Psoas muscle (tissue), 8 donors: ENCODE measurements at regions of chr7 and their contacts with region 1.

Region 1: DNA sequence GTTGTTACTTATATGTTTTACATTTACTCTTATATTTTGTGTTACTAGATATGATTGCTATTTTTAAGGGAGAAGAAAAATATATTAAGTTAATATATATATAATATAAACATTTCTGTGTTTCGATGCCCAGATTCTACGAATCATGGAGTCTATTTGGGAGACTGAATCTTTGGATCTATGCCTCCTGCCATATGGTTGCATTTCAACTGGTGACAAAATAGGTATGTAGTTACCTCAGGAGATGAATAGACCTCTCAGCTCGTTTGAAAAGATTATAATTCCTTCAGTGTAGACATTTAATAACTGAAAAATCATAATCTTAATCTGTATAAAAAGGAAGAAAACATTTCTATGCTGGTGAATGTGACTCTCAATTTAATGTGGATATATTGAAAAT is 16.9 kb downstream of the PIK3CG start:
- DNase-seq: no peak
- ATAC-seq: no peak
- H3K4me3 ChIP-seq: no peak overlapping the region
- H3K27ac ChIP-seq: no peak overlapping the region
- H3K4me1 ChIP-seq: no peaks in the 10 kb centered on the region
- H3K27me3 ChIP-seq: no peaks in the 10 kb centered on the region
- CTCF ChIP-seq: no peak

Region 2: GRCh38 chr7:106927536-106927935 is 45.6 kb after region 1 on chr7:
- intact Hi-C with region 1: loop called in 1 of 2 experiments (anchors 2 kb)
- DNase-seq: no peak
- ATAC-seq: no peak
- H3K4me3 ChIP-seq: no peak overlapping the region
- H3K27ac ChIP-seq: no peak overlapping the region
- H3K4me1 ChIP-seq: no peaks in the 10 kb centered on the region
- H3K27me3 ChIP-seq: no peaks in the 10 kb centered on the region
- CTCF ChIP-seq: no peak

Region 3: DNA sequence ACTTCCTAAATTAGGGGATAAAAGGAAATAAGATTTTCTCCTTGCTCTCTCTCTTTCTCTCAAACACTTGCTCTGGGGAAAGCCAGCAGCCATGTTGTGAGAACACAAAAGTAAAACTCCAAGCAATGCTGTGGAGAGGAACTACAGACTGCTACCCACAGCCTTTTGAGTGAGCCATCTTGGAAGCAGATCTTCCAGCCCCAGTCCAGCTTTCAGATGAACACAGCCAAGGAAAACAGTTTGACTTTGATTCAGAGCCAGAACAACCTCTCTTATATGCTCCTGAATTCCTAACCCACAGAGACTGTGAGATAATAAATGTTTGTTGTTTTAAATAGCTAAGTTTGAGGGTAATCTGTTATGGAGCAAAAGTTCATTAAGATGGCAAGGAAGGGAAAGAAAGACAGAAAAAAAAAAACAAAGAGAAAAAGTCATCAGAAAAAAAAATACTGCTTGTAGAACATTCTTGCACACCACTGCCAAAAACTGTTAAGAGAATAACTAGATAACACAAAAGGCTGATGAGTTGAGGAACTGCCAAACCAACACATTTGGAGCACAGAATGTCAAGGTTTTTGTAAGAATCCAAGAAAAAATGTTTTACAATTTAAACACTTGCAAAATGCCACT is 141.7 kb after region 1 on chr7:
- intact Hi-C with region 1: no loop called
- DNase-seq: no peak
- ATAC-seq: no peak
- H3K4me3 ChIP-seq: no peak overlapping the region
- H3K27ac ChIP-seq: no peak overlapping the region
- H3K4me1 ChIP-seq: no peaks in the 10 kb centered on the region
- H3K27me3 ChIP-seq: no peaks in the 10 kb centered on the region
- CTCF ChIP-seq: no peak

Region 4: GRCh38 chr7:107044347-107045194 is 162.6 kb after region 1 on chr7 and contains the start of gene PRKAR2B:
- intact Hi-C with region 1: no loop called
- DNase-seq: peak; percentile 73 to 80
- ATAC-seq: peak; percentile 52 to 87 (median 84)
- H3K4me3 ChIP-seq: peak within 1 kb of the TSS; percentile 77
- H3K27ac ChIP-seq: no peak within 1 kb of the TSS
- H3K4me1 ChIP-seq: peaks cover 15% of the 10 kb centered on the region
- H3K27me3 ChIP-seq: peaks cover 0 to 23% (median 0%) of the 10 kb centered on the region in 3 donors
- CTCF ChIP-seq: no peak
- total RNA-seq, gene PRKAR2B: 1.3 to 2.5 (median 1.7) TPM

Region 5: DNA sequence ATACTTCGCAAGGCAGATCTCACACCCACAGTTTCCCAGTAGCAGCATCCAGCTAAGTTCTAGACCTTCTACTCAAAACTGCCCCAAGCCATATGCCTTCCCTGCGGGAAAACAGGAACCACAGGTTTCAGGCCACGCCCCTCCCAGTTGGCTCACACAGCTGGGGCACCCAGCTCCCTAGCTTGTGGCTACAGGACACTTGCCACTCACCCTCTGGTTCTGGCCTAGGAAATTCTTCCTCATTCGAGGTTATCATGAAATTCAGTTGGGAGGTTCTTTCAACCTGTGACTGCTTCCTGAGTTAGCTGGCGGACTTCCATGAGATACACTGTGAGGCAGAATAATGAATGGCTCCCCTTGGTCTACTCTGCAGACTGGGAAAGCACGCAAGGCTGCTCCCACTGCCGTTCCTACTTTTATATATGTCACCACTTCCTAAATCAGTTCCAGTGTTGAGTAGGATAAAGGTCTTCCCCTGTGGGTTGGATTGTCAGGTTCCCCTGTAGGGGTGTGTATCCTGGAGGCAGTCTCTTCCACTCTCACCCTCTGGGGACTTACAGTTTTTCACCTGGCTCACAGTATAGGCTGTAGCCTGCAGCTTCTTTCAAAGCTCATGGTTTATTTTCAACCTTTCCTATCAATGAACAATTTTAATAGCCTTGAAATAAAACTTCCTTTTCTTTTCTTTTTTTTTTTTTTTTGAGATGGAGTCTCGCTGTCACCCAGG is 624.8 kb after region 1 on chr7:
- intact Hi-C with region 1: no loop called
- DNase-seq: peak; percentile 32 to 61
- ATAC-seq: peak in 1 of 4 donors; percentile 33
- H3K4me3 ChIP-seq: no peak overlapping the region
- H3K27ac ChIP-seq: no peak overlapping the region
- H3K4me1 ChIP-seq: peaks cover 6% of the 10 kb centered on the region
- H3K27me3 ChIP-seq: no peaks in the 10 kb centered on the region
- CTCF ChIP-seq: no peak